ENCODE measurements at regions of chr7 and their contacts with region 1.

Region 1: DNA sequence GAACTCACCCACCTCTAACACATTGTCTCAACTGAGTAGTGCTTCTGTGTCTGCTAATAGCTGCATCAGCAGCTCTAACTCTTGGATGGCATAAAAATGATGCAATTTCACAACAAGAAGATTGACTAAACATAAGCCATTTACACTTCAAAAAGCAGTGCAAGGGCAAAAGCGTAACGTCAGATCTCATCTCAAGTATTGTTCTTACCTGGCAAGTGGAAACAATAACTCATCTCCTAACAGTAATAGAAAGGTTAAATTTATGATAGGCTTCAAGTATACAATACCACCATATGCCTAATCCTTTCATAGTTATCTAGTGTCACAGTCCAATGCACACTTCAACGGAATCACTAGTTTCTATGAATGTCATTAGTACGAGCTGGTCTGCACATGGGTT is 14.8 kb downstream of the TPK1 start:
- DNase-seq: no peak
- H3K4me3 ChIP-seq: no peak overlapping the region
- H3K4me3 Mint-ChIP-seq: peak overlapping the region; percentile 48
- H3K27ac Mint-ChIP-seq: peak overlapping the region; percentile 67
- H3K4me1 ChIP-seq: peaks cover 73% of the 10 kb centered on the region
- H3K4me1 Mint-ChIP-seq: peaks cover 28% of the 10 kb centered on the region
- H3K27me3 ChIP-seq: no peaks in the 10 kb centered on the region
- H3K27me3 Mint-ChIP-seq: no peaks in the 10 kb centered on the region
- CTCF ChIP-seq: no peak

Region 2: GRCh38 chr7:144588559-144589051 is 232.5 kb before region 1 on chr7:
- CTCF ChIA-PET with region 1: no interaction called
- POLR2A ChIA-PET with region 1: no interaction called
- intact Hi-C with region 1: loop called (anchors 10 kb)
- DNase-seq: no peak
- H3K4me3 ChIP-seq: no peak overlapping the region
- H3K4me3 Mint-ChIP-seq: no peak overlapping the region
- H3K27ac Mint-ChIP-seq: no peak overlapping the region
- H3K4me1 ChIP-seq: peaks cover 22% of the 10 kb centered on the region
- H3K4me1 Mint-ChIP-seq: peaks cover 19% of the 10 kb centered on the region
- H3K27me3 ChIP-seq: no peaks in the 10 kb centered on the region
- H3K27me3 Mint-ChIP-seq: no peaks in the 10 kb centered on the region
- CTCF ChIP-seq: no peak

Region 3: GRCh38 chr7:144796919-144797318 is 24.1 kb before region 1 on chr7:
- CTCF ChIA-PET with region 1: no interaction called
- POLR2A ChIA-PET with region 1: no interaction called
- intact Hi-C with region 1: no loop called
- DNase-seq: peak in 1 of 2 experiments; percentile 40
- H3K4me3 ChIP-seq: no peak overlapping the region
- H3K4me3 Mint-ChIP-seq: no peak overlapping the region
- H3K27ac Mint-ChIP-seq: no peak overlapping the region
- H3K4me1 ChIP-seq: no peaks in the 10 kb centered on the region
- H3K4me1 Mint-ChIP-seq: no peaks in the 10 kb centered on the region
- H3K27me3 ChIP-seq: no peaks in the 10 kb centered on the region
- H3K27me3 Mint-ChIP-seq: no peaks in the 10 kb centered on the region
- CTCF ChIP-seq: no peak

Measured in Caco-2 (cell line).